HEK293 (cell line): ENCODE measurements at regions of chr14 and their contacts with region 1.

Region 1: DNA sequence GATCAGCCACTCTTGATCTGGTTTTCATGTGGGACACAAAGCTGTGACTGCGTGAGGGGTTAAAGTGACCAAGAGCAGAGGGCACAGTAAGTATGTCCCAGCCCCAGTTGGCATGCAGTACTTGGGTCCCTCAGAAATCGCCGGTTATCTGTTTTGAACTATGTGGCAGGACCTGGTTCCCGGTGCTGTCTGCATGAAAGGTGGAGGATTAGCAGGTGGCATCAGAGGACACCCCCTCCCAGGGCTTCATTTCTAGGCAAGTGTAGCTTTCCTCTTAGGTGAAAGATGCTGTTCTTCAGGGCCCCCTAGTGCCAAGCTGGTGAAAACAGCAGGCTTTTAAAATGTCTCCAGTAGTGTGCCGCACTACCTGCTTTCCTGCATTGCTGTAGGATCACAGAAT is 57.1 kb downstream of the ATG14 start:
- H3K4me3 ChIP-seq: no peak overlapping the region
- H3K27ac ChIP-seq: no peak overlapping the region
- H3K4me1 ChIP-seq: no peaks in the 10 kb centered on the region
- CTCF ChIP-seq: peak; percentile 30; the same call in 1 of the 2 replicates

Region 2: DNA sequence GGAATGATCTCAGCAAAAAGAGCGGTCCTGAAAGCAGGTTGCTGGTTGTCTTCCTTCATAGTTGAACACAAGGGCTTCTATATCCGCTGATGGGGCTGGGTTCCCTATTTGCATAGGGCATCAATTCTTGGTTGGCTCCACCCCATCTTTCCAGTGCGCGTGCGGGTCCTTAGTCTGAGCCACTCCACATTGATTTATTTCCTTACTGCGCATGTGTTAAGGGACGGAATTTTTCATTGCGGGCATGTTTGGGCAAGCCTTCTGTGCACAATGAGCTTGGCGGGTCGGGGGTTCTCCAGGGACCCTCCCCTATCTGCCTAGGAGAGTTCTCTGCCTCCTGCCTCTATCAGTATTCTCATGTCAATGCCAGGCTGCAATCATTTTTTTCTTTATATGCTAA is 141.9 kb before region 1 on chr14:
- CTCF ChIA-PET with region 1: interaction called, 12 read pairs
- POLR2A ChIA-PET with region 1: no interaction called
- H3K4me3 ChIP-seq: no peak overlapping the region
- H3K27ac ChIP-seq: no peak overlapping the region
- H3K4me1 ChIP-seq: no peaks in the 10 kb centered on the region
- CTCF ChIP-seq: no peak

Region 3: DNA sequence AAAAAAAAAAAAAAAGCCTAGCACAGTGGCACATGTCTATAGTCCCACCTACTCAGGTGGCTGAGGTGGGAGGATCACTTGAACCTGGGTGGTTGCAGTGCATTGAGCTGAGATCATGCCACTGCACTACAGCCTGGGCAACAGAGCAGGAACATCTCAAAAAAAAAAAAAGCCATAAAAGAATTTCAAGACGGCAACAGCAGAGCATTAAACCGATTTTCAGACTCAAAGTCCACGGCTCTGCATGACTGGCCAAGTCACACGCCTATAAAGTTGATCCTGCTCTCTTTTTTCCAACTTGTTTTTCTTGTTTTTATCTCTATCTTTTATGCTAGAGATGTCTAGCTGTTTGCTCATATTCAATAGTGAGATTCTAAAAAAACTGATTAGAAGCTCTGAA is 37.9 kb before region 1 on chr14:
- CTCF ChIA-PET with region 1: interaction called, 11 read pairs
- POLR2A ChIA-PET with region 1: no interaction called
- H3K4me3 ChIP-seq: no peak overlapping the region
- H3K27ac ChIP-seq: no peak overlapping the region
- H3K4me1 ChIP-seq: no peaks in the 10 kb centered on the region
- CTCF ChIP-seq: no peak

Region 4: GRCh38 chr14:55404173-55404854 is 49.8 kb after region 1 on chr14:
- CTCF ChIA-PET with region 1: no interaction called
- POLR2A ChIA-PET with region 1: no interaction called
- H3K4me3 ChIP-seq: no peak overlapping the region
- H3K27ac ChIP-seq: no peak overlapping the region
- H3K4me1 ChIP-seq: no peaks in the 10 kb centered on the region
- CTCF ChIP-seq: no peak

Region 5: DNA sequence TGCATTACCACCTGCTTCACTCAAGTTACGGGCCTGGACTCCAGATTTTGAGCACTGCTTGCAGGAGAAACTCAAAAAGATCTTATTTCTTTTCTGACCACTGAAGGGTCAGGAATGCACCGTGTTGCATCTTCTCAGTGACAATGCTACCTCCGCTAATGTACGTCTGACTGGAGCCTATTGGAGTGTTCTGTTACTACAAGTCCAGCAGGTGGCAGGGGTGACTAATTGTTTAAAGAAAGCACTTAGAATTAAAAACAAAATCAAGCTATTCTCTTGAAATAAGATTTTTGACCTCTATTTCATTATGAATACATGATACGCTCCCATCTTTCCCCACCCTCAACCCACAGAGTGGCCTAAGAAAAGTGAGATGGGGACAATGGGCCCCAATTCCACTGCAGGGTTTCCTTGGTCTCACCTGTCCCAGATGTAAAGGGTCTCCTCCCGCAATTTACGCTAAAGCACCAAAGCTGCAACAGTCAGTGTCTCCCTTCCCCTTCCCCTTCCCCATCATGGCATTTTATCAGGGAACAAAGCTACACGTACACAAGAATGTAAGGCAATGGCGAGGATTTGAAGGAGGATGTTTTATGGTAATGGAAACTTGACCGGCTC is 83.7 kb after region 1 on chr14:
- CTCF ChIA-PET with region 1: no interaction called
- POLR2A ChIA-PET with region 1: no interaction called
- H3K4me3 ChIP-seq: no peak overlapping the region
- H3K27ac ChIP-seq: no peak overlapping the region
- H3K4me1 ChIP-seq: no peaks in the 10 kb centered on the region
- CTCF ChIP-seq: no peak

Region 6: GRCh38 chr14:55654243-55654642 is 299.7 kb after region 1 on chr14:
- CTCF ChIA-PET with region 1: no interaction called
- POLR2A ChIA-PET with region 1: no interaction called
- H3K4me3 ChIP-seq: no peak overlapping the region
- H3K27ac ChIP-seq: no peak overlapping the region
- H3K4me1 ChIP-seq: no peaks in the 10 kb centered on the region
- CTCF ChIP-seq: no peak